ENCODE measurements at regions of chr18 and their contacts with region 1.

Region 1: GRCh38 chr18:26757263-26758019 is 108.1 kb downstream of the AQP4 start:
- DNase-seq: peak in 4 of 6 donors; percentile 25 to 70 (median 66)
- ATAC-seq: peak; percentile 83 to 93 (median 92)
- H3K4me3 ChIP-seq: no peak overlapping the region
- H3K27ac ChIP-seq: peak overlapping the region; percentile 7 to 70 (median 66)
- H3K4me1 ChIP-seq: peaks cover 5 to 48% (median 38%) of the 10 kb centered on the region in 3 donors
- H3K27me3 ChIP-seq: no peaks in the 10 kb centered on the region
- CTCF ChIP-seq: no peak

Region 2: DNA sequence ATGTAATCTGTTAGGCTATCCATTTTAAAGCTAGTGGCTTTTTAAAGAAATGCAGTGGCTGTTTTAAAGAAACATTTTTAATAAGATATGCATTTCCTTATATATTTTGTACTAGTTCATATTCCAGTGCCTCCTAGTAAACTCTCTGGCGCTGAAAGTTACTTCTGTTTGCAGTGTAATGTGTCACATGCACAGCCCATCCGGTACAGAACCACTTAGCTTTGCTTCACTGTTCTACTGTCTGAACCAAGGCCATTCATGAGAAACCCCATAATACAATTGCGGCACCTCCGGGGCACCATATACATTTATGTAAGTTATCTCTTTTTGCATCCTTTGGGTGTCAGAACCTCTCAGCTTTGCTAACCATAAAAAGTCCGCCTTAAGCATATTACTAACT is 94.4 kb before region 1 on chr18:
- intact Hi-C with region 1: loop called in 1 of 3 experiments (anchors 10 kb)
- DNase-seq: no peak
- ATAC-seq: no peak
- H3K4me3 ChIP-seq: no peak overlapping the region
- H3K27ac ChIP-seq: no peak overlapping the region
- H3K4me1 ChIP-seq: peaks cover 0 to 5% (median under 1%) of the 10 kb centered on the region in 3 donors
- H3K27me3 ChIP-seq: peaks cover 0 to 6% (median 0%) of the 10 kb centered on the region in 4 donors
- CTCF ChIP-seq: no peak

Region 3: DNA sequence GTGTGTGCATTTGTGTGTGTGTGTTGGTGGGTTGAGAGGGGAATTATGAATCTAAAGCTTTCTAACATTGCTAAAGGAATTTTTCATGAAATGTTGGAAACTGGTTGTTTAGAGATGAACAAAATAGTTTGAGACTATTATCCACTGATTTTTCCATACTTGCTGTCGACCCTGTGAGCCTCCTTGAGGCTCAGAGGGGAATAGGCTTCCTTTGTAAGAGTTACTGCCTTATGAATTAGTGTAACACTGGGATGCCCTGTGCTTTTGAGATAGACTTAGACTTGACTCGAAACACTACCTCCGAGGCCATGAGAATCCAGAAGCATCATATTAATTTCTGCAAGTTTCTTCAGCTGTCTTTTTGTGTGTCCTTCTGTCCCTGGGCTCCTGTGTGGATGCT is 70.1 kb after region 1 on chr18:
- intact Hi-C with region 1: no loop called
- DNase-seq: no peak
- ATAC-seq: no peak
- H3K4me3 ChIP-seq: no peak overlapping the region
- H3K27ac ChIP-seq: no peak overlapping the region
- H3K4me1 ChIP-seq: no peaks in the 10 kb centered on the region
- H3K27me3 ChIP-seq: no peaks in the 10 kb centered on the region
- CTCF ChIP-seq: no peak

Region 4: GRCh38 chr18:28013066-28013465 is 1255.6 kb after region 1 on chr18:
- intact Hi-C with region 1: no loop called
- DNase-seq: no peak
- ATAC-seq: no peak
- H3K4me3 ChIP-seq: no peak overlapping the region
- H3K27ac ChIP-seq: no peak overlapping the region
- H3K4me1 ChIP-seq: no peaks in the 10 kb centered on the region
- H3K27me3 ChIP-seq: no peaks in the 10 kb centered on the region
- CTCF ChIP-seq: peak in 1 of 4 donors; percentile 13

Measured in pancreas (tissue), 10 donors.